ENCODE measurements at regions of chr18 and their contacts with region 1.

Region 1: DNA sequence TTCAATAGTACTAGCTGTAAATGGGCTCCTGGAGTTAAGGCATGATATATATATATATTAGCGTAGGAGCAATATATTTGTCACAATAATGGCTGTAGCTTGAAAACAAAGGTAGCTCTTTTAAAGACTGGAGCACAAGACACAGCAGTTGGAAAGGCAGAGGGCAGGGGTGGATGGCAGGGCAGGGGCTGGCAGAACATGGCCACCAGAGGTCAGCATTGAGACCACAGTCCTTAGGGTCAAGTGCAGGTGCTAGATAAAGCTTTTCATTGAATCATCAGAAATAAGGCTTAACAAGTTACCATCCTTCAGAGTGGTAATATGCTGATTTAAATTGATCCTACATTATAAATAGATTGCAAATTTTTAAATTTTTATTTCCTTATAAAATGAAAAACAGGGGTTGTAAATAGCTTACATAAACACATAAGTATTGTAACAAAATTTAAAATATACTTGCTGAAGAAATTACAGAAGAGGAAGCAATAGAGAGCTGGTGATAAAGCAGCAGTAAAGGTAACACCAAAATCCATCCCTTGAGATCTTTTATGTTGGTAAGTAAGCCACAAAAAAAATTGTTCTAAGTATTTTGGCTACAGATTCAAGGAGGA is 161.2 kb upstream of the PIEZO2 start:
- DNase-seq: peak; percentile 56
- ATAC-seq: peak; percentile 85

Region 2: GRCh38 chr18:10519999-10520935 is 790.3 kb before region 1 on chr18:
- intact Hi-C with region 1: no loop called
- DNase-seq: peak; percentile 89
- ATAC-seq: peak; percentile 90

Region 3: DNA sequence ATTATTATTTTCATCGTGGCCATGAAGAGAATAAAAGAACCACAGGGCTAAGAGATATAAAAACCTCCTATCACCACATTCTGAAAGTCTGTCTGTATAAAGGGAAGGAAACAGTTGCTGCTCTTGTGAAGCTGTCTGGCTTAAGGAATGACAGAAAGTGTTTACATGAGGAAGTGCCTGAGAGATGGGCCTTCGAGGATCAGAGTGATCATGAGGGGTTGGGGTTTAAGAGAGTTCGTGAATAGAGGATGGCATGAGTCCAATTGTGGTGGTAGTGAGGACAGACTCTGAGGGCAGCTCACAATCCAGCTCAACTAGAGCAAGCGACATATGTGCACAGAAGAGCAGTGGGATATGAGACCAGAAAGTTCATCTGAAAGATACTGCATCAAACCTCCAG is 95.4 kb before region 1 on chr18:
- intact Hi-C with region 1: no loop called
- DNase-seq: no peak
- ATAC-seq: no peak

Region 4: DNA sequence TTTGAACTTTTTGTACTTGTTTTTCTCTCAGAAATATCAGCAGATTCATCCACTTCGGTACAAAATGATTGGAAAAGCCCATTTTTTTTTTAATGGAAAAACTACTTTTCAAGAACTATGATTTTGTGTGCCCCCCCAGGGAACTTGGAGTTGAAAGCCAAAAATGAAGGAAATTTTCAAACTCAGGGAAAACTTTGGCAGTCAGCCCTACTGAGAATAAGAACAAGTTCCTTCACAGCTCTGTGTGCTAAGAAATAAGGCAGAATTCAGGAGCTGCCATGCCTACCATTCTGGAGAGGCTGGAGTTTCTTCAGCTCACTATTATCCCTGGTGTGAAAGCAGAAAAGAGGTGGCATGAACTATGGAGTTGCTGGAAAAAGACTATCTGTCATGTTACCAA is 72.8 kb after region 1 on chr18:
- intact Hi-C with region 1: loop called (anchors 5 kb)
- DNase-seq: no peak
- ATAC-seq: no peak

Region 5: DNA sequence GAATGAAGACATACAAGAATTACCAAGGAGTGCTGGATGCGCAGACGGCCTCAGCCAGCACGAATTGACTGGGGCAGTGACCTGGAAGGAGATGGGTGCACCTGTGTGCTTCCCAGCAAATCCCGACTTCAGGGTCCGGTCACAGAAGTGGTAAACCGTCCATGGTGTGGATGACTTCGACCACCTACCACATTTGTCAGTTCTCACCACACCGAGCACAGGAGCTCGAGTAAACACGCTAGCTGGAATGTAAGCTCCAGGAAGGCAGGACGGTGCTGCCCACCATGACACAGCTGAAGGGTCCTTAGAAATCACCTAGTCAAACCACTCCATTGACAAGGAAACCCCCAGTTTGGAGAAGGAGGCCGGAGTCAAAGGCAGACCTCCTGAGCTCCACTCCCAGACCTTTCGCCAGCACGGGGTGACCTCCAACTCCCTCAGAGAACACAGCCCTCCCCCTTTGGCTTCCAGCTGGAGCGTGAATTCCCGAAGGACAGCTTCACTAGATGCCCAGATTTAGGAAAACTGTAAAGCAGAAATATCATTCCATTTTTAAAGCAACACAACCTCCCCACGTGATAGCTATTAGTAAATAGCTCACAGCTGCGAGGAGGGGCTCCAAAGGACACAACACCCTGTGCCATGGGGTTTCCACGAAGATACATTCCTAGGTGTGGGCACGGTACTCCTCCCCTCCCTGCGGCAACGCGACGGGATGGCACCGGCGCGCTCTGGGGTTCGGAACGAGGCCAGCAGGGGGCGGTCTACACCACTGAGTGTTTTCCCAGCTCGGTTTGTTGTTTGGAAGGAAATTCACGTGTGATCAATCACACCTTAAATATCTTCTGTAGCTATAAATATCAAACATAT is 344.4 kb after region 1 on chr18:
- intact Hi-C with region 1: no loop called
- DNase-seq: peak; percentile 72
- ATAC-seq: peak; percentile 86